ENCODE measurements at regions of chr3 and their contacts with region 1.

Region 1: GRCh38 chr3:58249358-58250092 is 11.9 kb downstream of the ABHD6 start:
- DNase-seq: no peak
- CTCF ChIP-seq: no peak

Region 2: DNA sequence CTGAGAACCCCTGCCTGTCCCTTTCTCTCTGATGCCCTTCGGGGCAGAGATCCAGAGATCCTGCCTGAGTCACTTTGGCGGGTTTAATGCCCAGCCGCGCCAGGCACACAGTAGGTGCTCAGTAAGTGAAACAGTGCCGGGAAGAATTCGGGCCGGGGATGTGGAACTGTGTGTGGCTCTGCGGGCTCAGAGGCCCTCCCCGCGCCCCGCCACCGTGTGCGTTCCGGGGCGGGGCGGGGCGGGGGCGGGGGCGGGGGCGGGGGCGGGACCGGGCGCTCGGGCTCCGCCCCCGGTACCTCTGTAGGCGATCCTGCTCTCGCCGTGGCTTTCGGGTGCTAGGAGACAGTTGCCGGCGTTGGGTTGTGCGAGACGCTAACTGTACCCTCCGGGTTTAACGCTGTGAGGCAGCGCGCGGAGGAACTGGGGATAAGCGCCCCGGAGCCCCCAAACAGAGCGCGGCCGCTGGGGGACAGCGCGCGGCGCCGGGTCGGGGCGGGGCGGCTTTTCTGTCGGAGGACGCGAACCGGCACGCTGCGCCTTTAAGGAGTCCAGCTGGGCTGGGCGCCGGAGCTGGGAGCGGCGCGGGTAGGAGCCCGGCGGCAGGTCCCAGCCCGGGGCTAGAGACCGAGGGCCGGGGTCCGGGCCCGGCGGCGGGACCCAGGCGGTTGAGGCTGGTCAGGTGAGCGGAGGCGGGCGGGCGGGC is 12.1 kb before region 1 on chr3 and contains the start of gene ABHD6:
- CTCF ChIA-PET with region 1: interaction called, 10 read pairs
- POLR2A ChIA-PET with region 1: no interaction called
- DNase-seq: peak; percentile 90
- CTCF ChIP-seq: peak; percentile 51